ENCODE measurements at regions of chr12 and their contacts with region 1.

Region 1: GRCh38 chr12:120234643-120235368 is 30.7 kb downstream of the PXN start:
- DNase-seq: peak; percentile 89 to 92
- ATAC-seq: peak; percentile 79
- H3K4me3 ChIP-seq: no peak overlapping the region
- H3K27ac ChIP-seq: peak overlapping the region in 1 of 2 donors; percentile 14
- H3K4me1 ChIP-seq: no peaks in the 10 kb centered on the region
- H3K27me3 ChIP-seq: no peaks in the 10 kb centered on the region

Region 2: GRCh38 chr12:120257041-120257821 is 22.4 kb after region 1 on chr12:
- intact Hi-C with region 1: loop called in 1 of 2 experiments (anchors 2 kb)
- DNase-seq: peak in 1 of 2 donors; percentile 71
- ATAC-seq: peak; percentile 86
- H3K4me3 ChIP-seq: no peak overlapping the region
- H3K27ac ChIP-seq: peak overlapping the region; percentile 16 to 85
- H3K4me1 ChIP-seq: peaks cover 0 to 4% of the 10 kb centered on the region in 2 donors
- H3K27me3 ChIP-seq: no peaks in the 10 kb centered on the region